Vagina (tissue), 2 donors: ENCODE measurements at regions of chr5 and their contacts with region 1.

Region 1: DNA sequence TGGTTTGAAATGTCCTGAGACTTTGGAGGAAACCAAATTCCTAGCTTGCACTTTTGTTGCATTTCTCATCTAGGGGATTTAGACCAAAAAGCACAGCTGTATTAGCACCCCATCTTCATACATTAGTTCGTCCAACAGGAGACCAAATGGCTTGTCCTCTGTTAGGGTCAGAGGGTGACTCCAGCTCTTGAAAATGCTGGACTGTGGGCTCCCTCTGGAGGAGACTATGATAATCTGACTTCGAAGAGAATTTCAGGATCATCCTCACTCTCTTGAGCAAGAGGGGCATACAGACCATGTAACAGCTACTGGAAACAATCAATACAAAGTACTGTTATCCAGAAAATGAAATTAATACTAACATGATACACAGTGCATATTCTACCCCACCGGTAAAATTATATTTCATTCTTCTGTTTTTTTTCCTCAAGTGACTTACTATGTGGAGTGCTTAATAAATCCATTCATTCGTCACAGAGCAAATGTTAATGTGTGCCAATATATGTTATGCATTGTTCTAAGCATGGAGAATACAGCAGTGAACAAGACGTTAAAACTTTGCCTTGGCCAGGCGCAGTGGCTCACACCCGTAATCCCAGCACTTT is 63.7 kb upstream of the PPP2CA start:
- DNase-seq: no peak
- H3K4me3 ChIP-seq: no peak overlapping the region
- H3K27ac ChIP-seq: no peak overlapping the region
- H3K4me1 ChIP-seq: no peaks in the 10 kb centered on the region
- H3K27me3 ChIP-seq: no peaks in the 10 kb centered on the region
- CTCF ChIP-seq: peak; percentile 69 to 87 (median 83)
- POLR2A ChIP-seq: no peak

Region 2: DNA sequence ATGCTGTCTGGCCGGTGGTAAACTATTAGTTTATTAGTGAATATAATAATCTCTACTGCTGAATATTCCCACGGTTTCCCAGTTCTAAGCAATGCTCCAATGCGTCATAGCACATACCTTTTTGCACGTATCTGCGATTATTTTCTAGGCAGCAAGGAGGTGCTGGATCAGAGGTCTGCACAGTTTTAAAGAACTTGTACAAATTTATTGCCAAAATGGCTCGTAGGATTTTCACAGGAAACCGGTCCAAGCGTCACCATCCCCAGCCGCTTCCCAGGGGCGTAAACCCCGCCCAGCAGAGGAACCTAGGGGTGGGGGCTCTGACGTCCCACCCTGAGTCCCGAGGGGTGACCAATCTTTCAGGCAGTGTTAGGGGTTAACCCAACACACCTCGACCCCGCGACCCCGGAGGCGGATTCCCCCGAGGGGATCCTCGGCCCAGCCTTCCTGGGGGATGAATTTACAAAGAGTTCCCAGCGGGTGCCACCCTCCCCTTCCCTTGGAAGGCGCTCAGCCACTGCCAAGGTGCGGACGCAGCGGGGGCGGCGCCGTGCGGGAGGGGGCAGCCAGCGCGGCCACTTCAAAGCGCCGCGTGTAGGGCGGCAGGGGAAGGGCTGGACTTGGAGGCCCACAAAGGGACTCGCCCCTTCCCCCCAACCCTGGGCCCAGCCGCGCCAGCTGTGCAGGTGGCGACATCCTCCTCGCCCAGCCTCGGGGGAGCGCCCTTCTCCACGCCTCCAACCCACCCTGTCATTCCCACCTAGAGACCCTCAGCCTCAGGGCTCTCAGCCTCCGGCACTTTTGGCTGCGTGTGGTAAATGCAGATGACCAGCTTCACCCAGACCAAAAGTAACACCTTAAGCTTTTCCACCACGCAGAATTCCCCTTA is 218.6 kb before region 1 on chr5:
- intact Hi-C with region 1: no loop called
- DNase-seq: no peak
- H3K4me3 ChIP-seq: peak overlapping the region; percentile 22 to 33
- H3K27ac ChIP-seq: no peak overlapping the region
- H3K4me1 ChIP-seq: peaks cover 11% of the 10 kb centered on the region
- H3K27me3 ChIP-seq: no peaks in the 10 kb centered on the region
- CTCF ChIP-seq: no peak
- POLR2A ChIP-seq: no peak

Region 3: DNA sequence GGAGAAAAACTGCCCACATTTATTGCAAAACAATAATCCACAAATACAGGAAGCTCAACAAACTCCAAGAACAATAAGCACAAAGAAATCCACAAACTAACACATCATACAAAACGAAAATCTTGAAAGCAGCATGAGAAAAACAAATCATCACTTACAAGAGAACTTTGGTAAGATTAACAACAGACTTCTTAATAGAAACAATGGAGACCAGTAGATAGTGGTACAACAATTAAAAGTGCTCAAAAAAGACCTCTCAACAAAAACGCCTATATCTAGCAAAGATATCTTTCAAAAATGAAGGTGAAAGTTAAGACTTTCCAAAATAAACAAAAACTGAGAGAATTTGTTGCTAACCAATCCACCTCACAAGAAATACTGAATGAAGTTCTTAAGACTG is 39.0 kb after region 1 on chr5:
- intact Hi-C with region 1: no loop called
- DNase-seq: no peak
- H3K4me3 ChIP-seq: no peak overlapping the region
- H3K27ac ChIP-seq: no peak overlapping the region
- H3K4me1 ChIP-seq: no peaks in the 10 kb centered on the region
- H3K27me3 ChIP-seq: no peaks in the 10 kb centered on the region
- CTCF ChIP-seq: no peak
- POLR2A ChIP-seq: no peak

Region 4: GRCh38 chr5:134446938-134447337 is 157.3 kb after region 1 on chr5:
- intact Hi-C with region 1: no loop called
- DNase-seq: no peak
- H3K4me3 ChIP-seq: no peak overlapping the region
- H3K27ac ChIP-seq: no peak overlapping the region
- H3K4me1 ChIP-seq: no peaks in the 10 kb centered on the region
- H3K27me3 ChIP-seq: no peaks in the 10 kb centered on the region
- CTCF ChIP-seq: no peak
- POLR2A ChIP-seq: no peak

Region 5: GRCh38 chr5:134577796-134578363 is 288.3 kb after region 1 on chr5:
- intact Hi-C with region 1: no loop called
- DNase-seq: no peak
- H3K4me3 ChIP-seq: no peak overlapping the region
- H3K27ac ChIP-seq: no peak overlapping the region
- H3K4me1 ChIP-seq: peaks cover 28% of the 10 kb centered on the region
- H3K27me3 ChIP-seq: no peaks in the 10 kb centered on the region
- CTCF ChIP-seq: peak; percentile 62 to 80 (median 76)
- POLR2A ChIP-seq: no peak

Region 6: GRCh38 chr5:135024956-135025729 is 735.5 kb after region 1 on chr5:
- intact Hi-C with region 1: loop called (anchors 10 kb)
- DNase-seq: no peak
- H3K4me3 ChIP-seq: no peak overlapping the region
- H3K27ac ChIP-seq: peak overlapping the region; percentile 95
- H3K4me1 ChIP-seq: peaks cover 10% of the 10 kb centered on the region
- H3K27me3 ChIP-seq: peaks cover 8% of the 10 kb centered on the region
- CTCF ChIP-seq: no peak
- POLR2A ChIP-seq: no peak